GM12878 (cell line): ENCODE measurements at regions of chr18 and their contacts with region 1.

Region 1: DNA sequence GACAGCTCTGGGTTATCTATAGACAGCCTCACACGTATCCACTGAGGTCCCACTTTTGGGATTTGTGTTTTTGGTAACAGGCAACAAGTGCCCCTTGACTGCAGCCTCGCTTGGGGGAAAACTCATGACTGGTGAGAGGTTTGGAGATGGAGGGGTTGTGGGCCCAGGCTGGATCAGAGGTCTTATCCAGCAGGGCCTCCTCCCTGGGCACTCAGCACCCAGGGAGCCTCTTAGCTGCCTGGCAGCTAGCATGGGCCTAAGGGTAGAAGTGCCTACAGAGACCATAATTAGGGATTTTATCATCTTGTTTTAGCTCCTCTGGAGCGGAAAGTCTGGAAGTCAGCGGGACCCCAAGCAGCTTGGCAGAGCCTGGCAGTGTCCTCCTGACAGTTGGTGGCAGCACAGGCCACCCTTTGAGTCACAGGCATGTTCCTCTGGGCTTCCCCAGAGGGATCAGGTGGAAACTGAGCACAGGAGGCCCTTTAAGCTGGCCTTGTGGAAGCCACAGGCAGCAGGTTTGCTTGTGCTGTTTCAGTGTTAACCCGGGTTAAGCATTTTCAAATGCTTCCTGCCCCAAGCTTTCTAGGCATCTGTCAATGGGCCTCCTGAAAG is 143.1 kb downstream of the KCTD1 start:
- DNase-seq: no peak
- ATAC-seq: peak; percentile 96
- H3K4me3 ChIP-seq: no peak overlapping the region
- H3K27ac ChIP-seq: no peak overlapping the region
- H3K4me1 ChIP-seq: peaks cover 5% of the 10 kb centered on the region; the same call in 1 of the 2 replicates
- H3K27me3 ChIP-seq: no peaks in the 10 kb centered on the region
- CTCF ChIP-seq: peak; percentile 66 to 75 (median 71); a peak in 5 of 6 replicates
- EP300 ChIP-seq: no peak
- POLR2A ChIP-seq: no peak
- RAD21 ChIP-seq: peak; percentile 85

Region 2: DNA sequence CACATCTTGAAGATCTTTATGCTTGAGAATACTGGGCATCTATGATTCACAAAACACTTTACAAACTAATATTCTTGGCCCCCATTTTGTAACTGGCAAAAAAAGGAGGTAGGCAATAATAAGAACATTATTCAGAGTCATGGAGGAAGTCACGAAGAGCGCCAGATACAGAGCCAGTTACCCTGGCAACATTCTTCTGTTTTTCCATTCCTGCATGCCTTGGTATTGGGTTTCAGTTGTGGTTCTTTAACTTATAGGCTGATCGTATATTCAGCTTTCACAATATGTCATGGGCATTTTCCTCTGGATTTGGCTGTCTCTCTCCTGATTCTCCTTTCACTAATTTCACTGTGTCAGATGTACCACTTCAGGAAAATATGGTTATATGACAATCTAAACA is 1710.1 kb before region 1 on chr18:
- CTCF ChIA-PET with region 1: no interaction called
- POLR2A ChIA-PET with region 1: no interaction called
- RAD21 ChIA-PET with region 1: no interaction called
- SMC1A ChIA-PET with region 1: no interaction called
- in situ Hi-C with region 1: no loop called
- intact Hi-C with region 1: no loop called
- DNase-seq: no peak
- ATAC-seq: no peak
- H3K4me3 ChIP-seq: no peak overlapping the region
- H3K27ac ChIP-seq: no peak overlapping the region
- H3K4me1 ChIP-seq: no peaks in the 10 kb centered on the region
- H3K27me3 ChIP-seq: no peaks in the 10 kb centered on the region
- CTCF ChIP-seq: no peak
- EP300 ChIP-seq: no peak
- POLR2A ChIP-seq: no peak
- RAD21 ChIP-seq: no peak

Region 3: GRCh38 chr18:24754572-24754971 is 1650.7 kb before region 1 on chr18:
- CTCF ChIA-PET with region 1: no interaction called
- POLR2A ChIA-PET with region 1: no interaction called
- RAD21 ChIA-PET with region 1: no interaction called
- SMC1A ChIA-PET with region 1: no interaction called
- in situ Hi-C with region 1: no loop called
- intact Hi-C with region 1: no loop called
- DNase-seq: no peak
- ATAC-seq: no peak
- H3K4me3 ChIP-seq: no peak overlapping the region
- H3K27ac ChIP-seq: no peak overlapping the region
- H3K4me1 ChIP-seq: no peaks in the 10 kb centered on the region
- H3K27me3 ChIP-seq: no peaks in the 10 kb centered on the region
- CTCF ChIP-seq: no peak
- EP300 ChIP-seq: no peak
- POLR2A ChIP-seq: no peak
- RAD21 ChIP-seq: no peak

Region 4: GRCh38 chr18:26190506-26190905 is 214.8 kb before region 1 on chr18:
- CTCF ChIA-PET with region 1: no interaction called
- POLR2A ChIA-PET with region 1: no interaction called
- RAD21 ChIA-PET with region 1: no interaction called
- SMC1A ChIA-PET with region 1: no interaction called
- in situ Hi-C with region 1: no loop called
- intact Hi-C with region 1: no loop called
- DNase-seq: peak; percentile 74
- ATAC-seq: peak; percentile 94
- H3K4me3 ChIP-seq: peak overlapping the region; percentile 58
- H3K27ac ChIP-seq: peak overlapping the region; percentile 77
- H3K4me1 ChIP-seq: peaks cover 12% of the 10 kb centered on the region
- H3K27me3 ChIP-seq: no peaks in the 10 kb centered on the region
- CTCF ChIP-seq: no peak
- EP300 ChIP-seq: peak in 1 of 2 experiments; percentile 30; a peak in 1 of 4 replicates
- POLR2A ChIP-seq: 0 out of 2 replicates have a peak, but pooled peaks have one; percentile 38
- RAD21 ChIP-seq: no peak

Region 5: DNA sequence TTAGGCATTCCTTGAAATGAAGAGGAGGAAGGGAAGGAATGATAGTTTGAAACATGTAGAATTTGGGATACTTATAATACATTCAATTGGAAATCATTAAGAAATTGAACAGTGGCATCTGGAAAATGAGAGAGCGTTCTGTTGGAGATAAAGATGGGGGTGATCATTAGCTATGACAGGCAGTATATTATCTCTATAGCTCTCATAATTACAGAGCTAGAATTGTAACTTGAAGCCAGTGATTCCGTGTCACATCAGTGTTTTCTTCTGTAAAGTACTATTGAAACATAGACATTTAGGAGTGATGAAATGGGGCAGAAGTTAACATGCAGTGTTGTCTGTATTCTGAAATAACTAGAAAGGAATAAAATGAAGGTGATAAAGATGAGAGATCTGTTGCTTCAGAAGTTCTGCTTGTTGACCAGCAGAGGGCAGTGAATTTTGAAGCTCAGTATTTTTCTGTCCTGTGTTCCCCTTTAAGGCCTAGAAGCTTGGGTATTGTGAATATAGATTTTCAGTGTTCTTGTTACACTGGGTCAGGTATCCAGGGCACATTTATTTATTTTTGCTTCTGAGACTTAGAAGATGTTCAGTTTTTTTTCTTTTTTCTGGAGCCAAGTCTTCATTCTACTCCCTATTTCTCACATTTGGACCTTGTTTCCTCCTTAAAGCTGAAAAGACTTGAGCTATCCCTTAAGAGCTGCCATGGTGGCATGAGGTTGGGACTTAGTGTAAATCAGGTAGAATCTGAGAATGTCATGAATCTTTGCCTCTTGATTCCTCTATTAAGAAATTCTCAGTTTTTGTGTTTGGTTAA is 21.6 kb before region 1 on chr18:
- CTCF ChIA-PET with region 1: interaction called, 17 read pairs
- POLR2A ChIA-PET with region 1: no interaction called
- RAD21 ChIA-PET with region 1: interaction called, 14 read pairs
- SMC1A ChIA-PET with region 1: interaction called, 11 read pairs
- in situ Hi-C with region 1: no loop called
- intact Hi-C with region 1: no loop called
- DNase-seq: peak; percentile 15
- ATAC-seq: peak; percentile 96
- H3K4me3 ChIP-seq: no peak overlapping the region
- H3K27ac ChIP-seq: no peak overlapping the region
- H3K4me1 ChIP-seq: 0 out of 2 replicates have a peak, but pooled peaks cover 3% of the 10 kb centered on the region
- H3K27me3 ChIP-seq: no peaks in the 10 kb centered on the region
- CTCF ChIP-seq: peak; percentile 62 to 76 (median 62)
- EP300 ChIP-seq: no peak
- POLR2A ChIP-seq: no peak
- RAD21 ChIP-seq: peak; percentile 77

Region 6: GRCh38 chr18:26438980-26439379 is 33.7 kb after region 1 on chr18:
- CTCF ChIA-PET with region 1: interaction called, 5 read pairs
- POLR2A ChIA-PET with region 1: no interaction called
- RAD21 ChIA-PET with region 1: interaction called, 3 read pairs
- SMC1A ChIA-PET with region 1: interaction called, 12 read pairs
- in situ Hi-C with region 1: no loop called
- intact Hi-C with region 1: no loop called
- DNase-seq: no peak
- ATAC-seq: peak; percentile 96
- H3K4me3 ChIP-seq: no peak overlapping the region
- H3K27ac ChIP-seq: no peak overlapping the region
- H3K4me1 ChIP-seq: peaks cover 10% of the 10 kb centered on the region; the same call in 1 of the 2 replicates
- H3K27me3 ChIP-seq: no peaks in the 10 kb centered on the region
- CTCF ChIP-seq: no peak
- EP300 ChIP-seq: no peak
- POLR2A ChIP-seq: no peak
- RAD21 ChIP-seq: 0 out of 2 replicates have a peak, but pooled peaks have one; percentile 2

Region 7: GRCh38 chr18:26458526-26459232 is 53.4 kb after region 1 on chr18:
- CTCF ChIA-PET with region 1: interaction called, 13 read pairs
- POLR2A ChIA-PET with region 1: no interaction called
- RAD21 ChIA-PET with region 1: interaction called, 9 read pairs
- SMC1A ChIA-PET with region 1: interaction called, 8 read pairs
- in situ Hi-C with region 1: no loop called
- intact Hi-C with region 1: no loop called
- DNase-seq: peak; percentile 70
- ATAC-seq: peak; percentile 75
- H3K4me3 ChIP-seq: no peak overlapping the region
- H3K27ac ChIP-seq: peak overlapping the region; percentile 75
- H3K4me1 ChIP-seq: peaks cover 48% of the 10 kb centered on the region
- H3K27me3 ChIP-seq: no peaks in the 10 kb centered on the region
- CTCF ChIP-seq: no peak
- EP300 ChIP-seq: peak; percentile 48 to 68; a peak in 2 of 4 replicates
- POLR2A ChIP-seq: peak; percentile 33; the same call in 1 of the 2 replicates
- RAD21 ChIP-seq: no peak

Region 8: GRCh38 chr18:26548429-26549262 is 143.3 kb after region 1 on chr18 and contains the start of gene KCTD1:
- CTCF ChIA-PET with region 1: interaction called, 5 read pairs
- POLR2A ChIA-PET with region 1: no interaction called
- RAD21 ChIA-PET with region 1: interaction called, 26 read pairs
- SMC1A ChIA-PET with region 1: interaction called, 3 read pairs
- in situ Hi-C with region 1: no loop called
- intact Hi-C with region 1: loop called (anchors 5 kb)
- DNase-seq: no peak
- ATAC-seq: peak; percentile 70
- H3K4me3 ChIP-seq: peak within 1 kb of the TSS; percentile 70
- H3K27ac ChIP-seq: peak within 1 kb of the TSS; percentile 67
- H3K4me1 ChIP-seq: peaks cover 31% of the 10 kb centered on the region
- H3K27me3 ChIP-seq: peaks cover 4 to 8% of the 10 kb centered on the region in 2 experiments
- CTCF ChIP-seq: no peak
- EP300 ChIP-seq: no peak
- POLR2A ChIP-seq: peak; percentile 46; the same call in 1 of the 2 replicates
- RAD21 ChIP-seq: no peak
- polyA plus RNA-seq, gene KCTD1: 1.5 to 1.8 TPM

Region 9: GRCh38 chr18:26650310-26651268 is 245.3 kb after region 1 on chr18:
- CTCF ChIA-PET with region 1: interaction called, 35 read pairs
- POLR2A ChIA-PET with region 1: no interaction called
- RAD21 ChIA-PET with region 1: interaction called, 12 read pairs
- SMC1A ChIA-PET with region 1: interaction called, 14 read pairs
- in situ Hi-C with region 1: loop called (anchors 5 kb)
- intact Hi-C with region 1: loop called (anchors 1 kb)
- DNase-seq: no peak
- ATAC-seq: no peak
- H3K4me3 ChIP-seq: no peak overlapping the region
- H3K27ac ChIP-seq: no peak overlapping the region
- H3K4me1 ChIP-seq: peaks cover 8% of the 10 kb centered on the region
- H3K27me3 ChIP-seq: peaks cover 5 to 22% of the 10 kb centered on the region in 2 experiments
- CTCF ChIP-seq: no peak
- EP300 ChIP-seq: no peak
- POLR2A ChIP-seq: no peak
- RAD21 ChIP-seq: no peak

Region 10: GRCh38 chr18:27005589-27005988 is 600.3 kb after region 1 on chr18:
- CTCF ChIA-PET with region 1: interaction called, 10 read pairs
- POLR2A ChIA-PET with region 1: no interaction called
- RAD21 ChIA-PET with region 1: interaction called, 3 read pairs
- SMC1A ChIA-PET with region 1: interaction called, 4 read pairs
- in situ Hi-C with region 1: no loop called
- intact Hi-C with region 1: loop called (anchors 2 kb)
- DNase-seq: no peak
- ATAC-seq: peak; percentile 88
- H3K4me3 ChIP-seq: no peak overlapping the region
- H3K27ac ChIP-seq: no peak overlapping the region
- H3K4me1 ChIP-seq: no peaks in the 10 kb centered on the region
- H3K27me3 ChIP-seq: 0 out of 4 replicates have a peak, but pooled peaks cover 0 to 2% of the 10 kb centered on the region in 2 experiments
- CTCF ChIP-seq: peak; percentile 38 to 58 (median 54); a peak in 5 of 6 replicates
- EP300 ChIP-seq: no peak
- POLR2A ChIP-seq: no peak
- RAD21 ChIP-seq: peak; percentile 59